HepG2 (cell line): ENCODE measurements at regions of chr2 and their contacts with region 1.

Region 1: GRCh38 chr2:61016808-61017555 is 538 bp upstream of the PEX13 start:
- DNase-seq: peak; percentile 55
- ATAC-seq: peak; percentile 63
- H3K4me3 ChIP-seq: peak overlapping the region; percentile 74 to 94 (median 93)
- H3K27ac ChIP-seq: peak overlapping the region; percentile 99
- H3K4me1 ChIP-seq: peaks cover 59% of the 10 kb centered on the region
- H3K27me3 ChIP-seq: no peaks in the 10 kb centered on the region; a peak in 1 of 5 replicates
- CTCF ChIP-seq: no peak
- EP300 ChIP-seq: 0 out of 4 replicates have a peak, but pooled peaks of 1 of the 2 experiments have one; percentile 42
- POLR2A ChIP-seq: peak in 1 of 2 experiments; percentile 58; a peak in 3 of 4 replicates
- RAD21 ChIP-seq: no peak

Region 2: GRCh38 chr2:60881047-60881932 is 135.7 kb before region 1 on chr2 and contains the start of gene REL:
- CTCF ChIA-PET with region 1: no interaction called
- POLR2A ChIA-PET with region 1: no interaction called
- in situ Hi-C with region 1: no loop called
- intact Hi-C with region 1: loop called (anchors 5 kb)
- DNase-seq: peak; percentile 83
- ATAC-seq: peak; percentile 93
- H3K4me3 ChIP-seq: peak within 1 kb of the TSS; percentile 94 to 98 (median 98)
- H3K27ac ChIP-seq: peak within 1 kb of the TSS; percentile 93
- H3K4me1 ChIP-seq: peaks cover 39% of the 10 kb centered on the region
- H3K27me3 ChIP-seq: no peaks in the 10 kb centered on the region; a peak in 1 of 5 replicates
- CTCF ChIP-seq: no peak; the same call in none of the 2 replicates
- EP300 ChIP-seq: peak in 1 of 2 experiments; percentile 38; a peak in 1 of 4 replicates
- POLR2A ChIP-seq: peak; percentile 61 to 84
- RAD21 ChIP-seq: no peak
- total RNA-seq, gene REL: 7.0 and 9.7 TPM in 2 replicates

Region 3: DNA sequence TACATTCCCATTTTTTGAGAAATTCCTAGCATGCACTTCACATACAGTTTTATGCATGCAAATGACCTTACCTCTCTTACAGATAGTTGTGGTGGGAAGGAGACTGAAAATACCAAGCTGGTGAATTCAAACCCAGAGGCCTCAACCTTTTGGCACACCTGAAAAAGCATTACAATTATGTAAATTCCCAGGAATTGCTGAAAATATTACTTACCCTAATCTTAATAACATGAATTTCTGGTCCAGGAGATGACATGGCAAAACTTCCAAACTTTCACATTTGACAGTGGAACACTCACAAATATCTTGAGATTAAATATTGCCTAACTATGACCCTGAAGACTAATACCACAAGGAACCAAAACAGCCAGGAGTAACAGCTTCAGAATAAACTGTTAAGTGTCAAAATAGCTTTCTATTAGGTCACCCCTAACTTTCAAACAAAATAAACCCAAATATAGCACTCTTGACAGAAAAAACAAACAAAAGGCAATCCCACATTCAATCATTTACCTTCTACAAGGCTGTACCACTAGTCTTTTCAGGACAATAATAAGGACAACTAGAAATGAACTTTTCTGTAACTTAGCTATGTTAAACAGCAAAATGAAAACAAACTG is 10.4 kb before region 1 on chr2:
- CTCF ChIA-PET with region 1: no interaction called
- POLR2A ChIA-PET with region 1: interaction called, 20 read pairs
- in situ Hi-C with region 1: no loop called
- intact Hi-C with region 1: no loop called
- DNase-seq: no peak
- ATAC-seq: peak; percentile 44
- H3K4me3 ChIP-seq: no peak overlapping the region
- H3K27ac ChIP-seq: no peak overlapping the region
- H3K4me1 ChIP-seq: 0 out of 2 replicates have a peak, but pooled peaks cover 9% of the 10 kb centered on the region
- H3K27me3 ChIP-seq: no peaks in the 10 kb centered on the region
- CTCF ChIP-seq: no peak
- EP300 ChIP-seq: no peak
- POLR2A ChIP-seq: no peak
- RAD21 ChIP-seq: no peak

Region 4: GRCh38 chr2:61065715-61066709 is 49.0 kb after region 1 on chr2 and contains the start of gene SANBR:
- CTCF ChIA-PET with region 1: no interaction called
- POLR2A ChIA-PET with region 1: interaction called, 7 read pairs
- in situ Hi-C with region 1: no loop called
- intact Hi-C with region 1: loop called (anchors 2 kb)
- DNase-seq: peak; percentile 78
- ATAC-seq: peak; percentile 97
- H3K4me3 ChIP-seq: peak within 1 kb of the TSS; percentile 86 to 97 (median 94)
- H3K27ac ChIP-seq: peak within 1 kb of the TSS; percentile 90
- H3K4me1 ChIP-seq: peaks cover 28% of the 10 kb centered on the region
- H3K27me3 ChIP-seq: no peaks in the 10 kb centered on the region
- CTCF ChIP-seq: no peak; the same call in 1 of the 2 replicates
- EP300 ChIP-seq: no peak
- POLR2A ChIP-seq: peak; percentile 49 to 84
- RAD21 ChIP-seq: peak; percentile 53
- total RNA-seq, gene SANBR: 20.9 and 22.9 TPM in 2 replicates

Region 5: DNA sequence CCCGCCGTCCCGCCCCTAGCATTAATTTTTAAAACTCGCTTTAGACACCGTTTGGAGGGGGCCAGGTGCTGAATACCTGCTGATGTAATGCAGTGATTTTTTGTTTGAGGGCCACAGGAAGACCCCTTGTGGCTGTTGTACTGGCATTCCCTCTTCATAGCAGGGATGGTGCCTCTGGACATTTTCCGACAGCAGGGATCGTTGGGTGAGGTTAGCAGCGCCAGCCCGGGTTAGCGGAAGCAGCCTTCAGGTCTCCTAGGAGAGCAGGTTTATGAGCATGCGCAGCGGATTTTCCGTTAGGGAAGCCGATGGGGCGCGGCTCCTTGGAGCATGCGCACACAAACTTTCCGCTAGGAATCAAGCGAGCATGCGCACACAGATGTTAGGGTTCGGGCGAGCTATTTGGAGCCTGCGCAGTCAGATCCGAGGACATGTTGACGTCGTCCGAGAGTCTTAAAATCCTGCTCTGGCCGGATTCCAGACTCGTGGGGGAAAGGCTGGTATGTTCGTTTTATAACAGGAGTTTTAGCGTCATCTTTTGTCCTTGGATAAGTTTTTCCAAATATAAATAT is 127.8 kb after region 1 on chr2:
- CTCF ChIA-PET with region 1: no interaction called
- POLR2A ChIA-PET with region 1: no interaction called
- in situ Hi-C with region 1: no loop called
- intact Hi-C with region 1: loop called (anchors 10 kb)
- DNase-seq: peak; percentile 99
- ATAC-seq: peak; percentile 99
- H3K4me3 ChIP-seq: peak overlapping the region; percentile 75 to 90 (median 81)
- H3K27ac ChIP-seq: peak overlapping the region; percentile 72
- H3K4me1 ChIP-seq: peaks cover 9% of the 10 kb centered on the region
- H3K27me3 ChIP-seq: no peaks in the 10 kb centered on the region
- CTCF ChIP-seq: peak; percentile 49; the same call in 1 of the 2 replicates
- EP300 ChIP-seq: no peak
- POLR2A ChIP-seq: peak; percentile 86 to 92
- RAD21 ChIP-seq: peak; percentile 21; the same call in 1 of the 2 replicates

Region 6: DNA sequence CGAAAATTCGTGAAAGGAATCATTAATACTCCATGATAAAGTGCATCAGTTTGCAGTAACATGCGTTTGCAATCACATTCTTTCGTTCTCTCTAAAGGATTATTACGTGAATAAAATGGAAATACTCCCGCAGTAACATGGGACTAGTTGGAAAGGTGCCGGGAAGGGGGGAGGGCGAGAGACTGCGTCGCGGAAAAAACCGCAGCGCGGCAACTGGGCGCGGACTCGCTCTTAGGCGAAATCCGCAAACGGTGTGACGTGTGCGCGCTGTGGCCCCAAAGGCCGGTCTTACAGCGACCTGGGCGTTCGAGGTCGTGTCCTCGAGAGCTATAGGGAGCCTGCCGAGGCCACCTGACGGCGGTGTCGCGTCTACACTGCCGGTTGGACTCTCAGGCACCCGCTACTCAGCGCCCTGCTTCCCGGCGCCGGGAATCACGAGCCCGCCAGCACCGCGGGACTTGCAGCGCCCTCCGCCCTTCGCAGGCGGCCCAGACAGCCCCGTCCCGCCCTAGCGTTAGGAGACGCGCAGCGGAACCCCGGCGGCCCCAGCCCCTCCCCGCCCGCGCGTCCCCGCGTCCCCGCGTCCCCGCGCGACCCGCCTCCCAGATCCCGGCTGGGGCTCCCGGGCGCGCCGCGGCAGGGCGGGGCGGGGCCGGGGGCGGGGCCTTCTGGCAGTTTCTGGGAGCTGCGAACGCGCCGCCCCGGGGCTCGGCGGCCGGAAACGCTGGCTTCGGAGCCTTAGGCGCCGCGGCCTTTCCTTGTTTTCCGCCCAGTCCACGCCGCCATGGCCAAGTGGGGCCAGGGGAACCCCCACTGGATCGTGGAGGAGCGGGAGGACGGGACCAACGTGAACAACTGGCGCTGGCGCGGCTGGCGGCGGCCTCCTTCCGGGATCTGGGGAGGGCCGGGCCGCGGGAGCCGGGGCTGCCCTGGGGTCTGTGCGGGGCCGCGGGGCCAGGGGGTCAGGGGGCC is 160.1 kb after region 1 on chr2:
- CTCF ChIA-PET with region 1: no interaction called
- POLR2A ChIA-PET with region 1: interaction called, 13 read pairs
- in situ Hi-C with region 1: no loop called
- intact Hi-C with region 1: loop called (anchors 2 kb)
- DNase-seq: peak; percentile 94
- ATAC-seq: peak; percentile 92
- H3K4me3 ChIP-seq: peak overlapping the region; percentile 85 to 94 (median 93)
- H3K27ac ChIP-seq: peak overlapping the region; percentile 93
- H3K4me1 ChIP-seq: peaks cover 63% of the 10 kb centered on the region
- H3K27me3 ChIP-seq: no peaks in the 10 kb centered on the region
- CTCF ChIP-seq: peak; percentile 59
- EP300 ChIP-seq: peak; percentile 17 to 78; a peak in 2 of 4 replicates
- POLR2A ChIP-seq: peak; percentile 96 to 99
- RAD21 ChIP-seq: peak; percentile 82